ENCODE measurements at regions of chr14 and their contacts with region 1.

Region 1: DNA sequence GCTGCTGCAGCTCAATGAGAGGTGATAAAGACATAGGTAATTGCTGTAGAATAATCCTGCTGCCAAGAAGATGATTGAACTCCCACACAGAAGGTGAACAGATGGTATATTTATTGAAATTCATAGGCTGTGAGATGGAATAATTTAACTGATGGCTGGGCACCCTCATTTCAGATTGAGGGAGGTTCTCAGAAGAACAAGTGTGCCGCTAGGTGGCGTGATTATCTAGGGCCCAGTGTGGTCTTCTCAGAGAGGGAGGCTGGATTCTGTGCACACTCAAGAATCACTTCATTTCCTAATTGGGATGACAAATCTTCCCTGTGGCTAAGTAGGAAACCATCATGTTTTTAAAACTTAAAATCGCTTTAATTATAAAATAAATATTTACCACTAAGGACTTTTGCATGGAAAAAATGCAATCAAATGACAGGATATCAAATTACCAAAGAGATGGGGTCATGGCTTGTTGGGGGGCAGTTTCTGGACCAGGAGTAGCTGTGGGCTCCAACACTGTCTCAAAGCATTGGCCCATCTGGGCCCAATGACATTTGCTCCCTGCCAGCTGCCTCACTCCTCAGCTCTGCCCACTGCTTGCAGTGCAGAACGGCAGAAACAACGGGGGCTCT is 132.3 kb downstream of the SNAPC1 start:
- DNase-seq: no peak
- ATAC-seq: no peak
- H3K4me3 ChIP-seq: no peak overlapping the region
- H3K27ac ChIP-seq: no peak overlapping the region
- H3K4me1 ChIP-seq: no peaks in the 10 kb centered on the region
- H3K27me3 ChIP-seq: peaks cover 0 to 3% (median 0%) of the 10 kb centered on the region in 3 donors
- CTCF ChIP-seq: peak in 1 of 5 experiments; percentile 21
- POLR2A ChIP-seq: no peak

Region 2: GRCh38 chr14:62126879-62127478 is 232.4 kb after region 1 on chr14:
- in situ Hi-C with region 1: loop called in 1 of 4 experiments (anchors 10 kb)
- intact Hi-C with region 1: no loop called
- DNase-seq: no peak
- ATAC-seq: peak in 1 of 2 donors; percentile 49
- H3K4me3 ChIP-seq: no peak overlapping the region
- H3K27ac ChIP-seq: no peak overlapping the region
- H3K4me1 ChIP-seq: no peaks in the 10 kb centered on the region
- H3K27me3 ChIP-seq: peaks cover 0 to 4% (median 4%) of the 10 kb centered on the region in 3 donors
- CTCF ChIP-seq: peak in 4 of 5 experiments; percentile 12 to 54 (median 37)
- POLR2A ChIP-seq: no peak